Gastrocnemius medialis (tissue), 4 donors: ENCODE measurements at regions of chr10 and their contacts with region 1.

Region 1: DNA sequence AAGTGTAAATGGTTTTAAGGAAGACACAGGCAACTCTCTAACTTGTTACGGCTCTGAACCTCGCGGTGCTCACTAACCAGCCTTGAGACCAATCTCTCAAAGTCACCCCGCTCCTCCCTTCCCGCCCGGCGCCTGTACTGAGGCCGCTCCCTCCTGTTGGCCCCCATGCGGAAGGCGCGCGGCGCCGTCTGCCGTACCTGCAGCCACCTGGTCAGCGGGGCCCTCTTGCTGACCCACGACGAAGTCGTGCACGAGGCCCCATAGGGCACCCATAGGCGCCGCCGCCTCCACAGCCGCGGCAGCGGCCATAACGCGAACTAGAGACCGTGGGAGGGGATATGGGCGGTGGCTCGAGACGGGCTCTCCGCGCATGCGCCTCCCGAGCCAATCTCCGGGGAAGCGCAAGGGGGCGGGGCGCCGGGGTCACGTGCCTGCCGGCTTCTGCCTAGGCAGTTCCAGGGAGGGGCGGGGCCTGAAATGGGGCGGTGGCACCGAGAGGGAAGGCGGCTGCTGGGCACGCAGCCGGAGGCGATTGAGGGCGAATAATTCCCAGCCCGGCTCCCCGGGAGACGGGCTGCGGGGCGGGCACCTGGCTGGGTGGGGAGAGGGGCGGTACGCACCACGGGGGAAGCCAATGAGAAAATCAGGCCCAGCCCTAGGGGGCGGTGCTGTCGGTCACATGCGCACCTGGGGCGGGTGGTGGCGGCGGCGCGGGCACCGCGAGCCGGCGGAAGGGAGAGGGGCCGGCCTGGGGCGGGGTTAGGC is at the start of gene MMS19:
- DNase-seq: peak; percentile 98 to 99
- ATAC-seq: peak; percentile 84 to 86
- H3K4me3 ChIP-seq: peak within 1 kb of the TSS; percentile 75 to 100 (median 88)
- H3K27ac ChIP-seq: peak within 1 kb of the TSS; percentile 94 to 100 (median 96)
- H3K4me1 ChIP-seq: peaks cover 49 to 53% of the 10 kb centered on the region in 2 donors
- H3K27me3 ChIP-seq: no peaks in the 10 kb centered on the region
- CTCF ChIP-seq: peak in 2 of 5 experiments; percentile 19 to 32
- POLR2A ChIP-seq: peak; percentile 75 to 79
- total RNA-seq, gene MMS19: 56.1 to 70.0 (median 65.0) TPM

Region 2: GRCh38 chr10:97356318-97356914 is 141.8 kb before region 1 on chr10:
- in situ Hi-C with region 1: no loop called
- intact Hi-C with region 1: no loop called
- DNase-seq: no peak
- ATAC-seq: no peak
- H3K4me3 ChIP-seq: no peak overlapping the region
- H3K27ac ChIP-seq: peak overlapping the region in 1 of 4 donors; percentile 22
- H3K4me1 ChIP-seq: peaks cover 2 to 8% of the 10 kb centered on the region in 2 donors
- H3K27me3 ChIP-seq: no peaks in the 10 kb centered on the region
- CTCF ChIP-seq: no peak
- POLR2A ChIP-seq: no peak

Region 3: GRCh38 chr10:97445722-97446639 is 52.3 kb before region 1 on chr10 and contains the starts of genes EXOSC1 and ZDHHC16:
- in situ Hi-C with region 1: no loop called
- intact Hi-C with region 1: loop called (anchors 2 kb)
- DNase-seq: peak; percentile 87
- ATAC-seq: peak; percentile 100
- H3K4me3 ChIP-seq: peak within 1 kb of the TSS; percentile 81 to 98 (median 90)
- H3K27ac ChIP-seq: peak within 1 kb of the TSS; percentile 69 to 79 (median 72)
- H3K4me1 ChIP-seq: peaks cover 20 to 40% of the 10 kb centered on the region in 2 donors
- H3K27me3 ChIP-seq: no peaks in the 10 kb centered on the region
- CTCF ChIP-seq: peak in 1 of 5 experiments; percentile 14
- POLR2A ChIP-seq: peak; percentile 50 to 57
- total RNA-seq, gene EXOSC1: 18.6 to 34.5 (median 26.8) TPM
- total RNA-seq, gene ZDHHC16: 25.0 to 34.5 (median 31.6) TPM

Region 4: GRCh38 chr10:97463363-97464132 is 34.7 kb before region 1 on chr10:
- in situ Hi-C with region 1: no loop called
- intact Hi-C with region 1: loop called (anchors 5 kb)
- DNase-seq: peak; percentile 16 to 51
- ATAC-seq: peak; percentile 79 to 81
- H3K4me3 ChIP-seq: no peak overlapping the region
- H3K27ac ChIP-seq: peak overlapping the region; percentile 54 to 64 (median 59)
- H3K4me1 ChIP-seq: peaks cover 5 to 8% of the 10 kb centered on the region in 2 donors
- H3K27me3 ChIP-seq: no peaks in the 10 kb centered on the region
- CTCF ChIP-seq: peak; percentile 83 to 90 (median 86)
- POLR2A ChIP-seq: no peak

Region 5: DNA sequence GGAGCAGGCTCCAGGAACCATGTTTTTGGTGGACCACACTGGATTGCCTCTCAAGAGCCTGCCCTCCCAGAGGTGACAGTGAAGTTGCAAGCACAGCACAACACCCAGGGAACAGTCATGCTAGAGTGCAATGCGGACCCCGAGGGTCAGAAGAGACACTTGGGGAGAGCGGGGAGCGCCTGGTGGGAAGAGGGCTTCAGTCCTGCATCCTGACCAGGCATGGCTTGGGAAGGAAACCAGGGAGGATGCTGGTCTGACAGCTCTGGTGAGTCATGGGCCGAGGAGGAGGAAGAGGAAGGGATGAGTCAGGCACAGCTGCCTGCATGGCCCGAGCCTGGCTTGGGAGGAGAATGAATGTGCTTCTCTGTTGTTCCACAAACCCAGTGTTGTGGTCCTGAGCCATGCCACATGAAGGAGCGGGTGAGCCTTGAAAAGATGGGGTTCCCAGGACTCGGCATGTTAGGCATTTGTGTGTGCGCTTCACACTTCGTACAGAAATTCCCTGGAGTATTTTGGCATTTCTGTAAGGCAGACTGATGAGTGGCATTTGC is 44.8 kb after region 1 on chr10:
- in situ Hi-C with region 1: no loop called
- intact Hi-C with region 1: loop called (anchors 2 kb)
- DNase-seq: peak; percentile 81 to 82
- ATAC-seq: peak; percentile 94 to 96
- H3K4me3 ChIP-seq: no peak overlapping the region
- H3K27ac ChIP-seq: peak overlapping the region; percentile 73 to 85 (median 81)
- H3K4me1 ChIP-seq: peaks cover 48 to 52% of the 10 kb centered on the region in 2 donors
- H3K27me3 ChIP-seq: no peaks in the 10 kb centered on the region
- CTCF ChIP-seq: no peak
- POLR2A ChIP-seq: no peak

Region 6: GRCh38 chr10:97640174-97640867 is 142.1 kb after region 1 on chr10 and contains the start of gene PI4K2A:
- in situ Hi-C with region 1: no loop called
- intact Hi-C with region 1: loop called (anchors 5 kb)
- DNase-seq: peak; percentile 99
- ATAC-seq: peak; percentile 99
- H3K4me3 ChIP-seq: peak within 1 kb of the TSS; percentile 74 to 93 (median 88)
- H3K27ac ChIP-seq: peak within 1 kb of the TSS; percentile 60 to 85 (median 73)
- H3K4me1 ChIP-seq: peaks cover 16 to 20% of the 10 kb centered on the region in 2 donors
- H3K27me3 ChIP-seq: no peaks in the 10 kb centered on the region
- CTCF ChIP-seq: no peak
- POLR2A ChIP-seq: peak; percentile 77 to 90
- total RNA-seq, gene PI4K2A: 16.1 to 18.5 (median 17.9) TPM

Region 7: GRCh38 chr10:97686962-97687784 is 188.9 kb after region 1 on chr10 and contains the start of gene AVPI1:
- in situ Hi-C with region 1: no loop called
- intact Hi-C with region 1: loop called (anchors 5 kb)
- DNase-seq: peak; percentile 93 to 95
- ATAC-seq: peak; percentile 91 to 94
- H3K4me3 ChIP-seq: peak within 1 kb of the TSS; percentile 69 to 97 (median 82)
- H3K27ac ChIP-seq: peak within 1 kb of the TSS; percentile 79 to 92 (median 80)
- H3K4me1 ChIP-seq: peaks cover 30 to 39% of the 10 kb centered on the region in 2 donors
- H3K27me3 ChIP-seq: no peaks in the 10 kb centered on the region
- CTCF ChIP-seq: no peak
- POLR2A ChIP-seq: peak; percentile 91 to 95
- total RNA-seq, gene AVPI1: 1.4 to 14.1 (median 3.0) TPM